ENCODE measurements at regions of chr4 and their contacts with region 1.

Region 1: GRCh38 chr4:163554870-163555465 is 60.5 kb downstream of the TMA16 start:
- DNase-seq: no peak
- H3K4me3 Mint-ChIP-seq: no peak overlapping the region
- H3K27ac Mint-ChIP-seq: no peak overlapping the region
- H3K4me1 Mint-ChIP-seq: peaks cover 28% of the 10 kb centered on the region
- H3K27me3 Mint-ChIP-seq: no peaks in the 10 kb centered on the region

Region 2: DNA sequence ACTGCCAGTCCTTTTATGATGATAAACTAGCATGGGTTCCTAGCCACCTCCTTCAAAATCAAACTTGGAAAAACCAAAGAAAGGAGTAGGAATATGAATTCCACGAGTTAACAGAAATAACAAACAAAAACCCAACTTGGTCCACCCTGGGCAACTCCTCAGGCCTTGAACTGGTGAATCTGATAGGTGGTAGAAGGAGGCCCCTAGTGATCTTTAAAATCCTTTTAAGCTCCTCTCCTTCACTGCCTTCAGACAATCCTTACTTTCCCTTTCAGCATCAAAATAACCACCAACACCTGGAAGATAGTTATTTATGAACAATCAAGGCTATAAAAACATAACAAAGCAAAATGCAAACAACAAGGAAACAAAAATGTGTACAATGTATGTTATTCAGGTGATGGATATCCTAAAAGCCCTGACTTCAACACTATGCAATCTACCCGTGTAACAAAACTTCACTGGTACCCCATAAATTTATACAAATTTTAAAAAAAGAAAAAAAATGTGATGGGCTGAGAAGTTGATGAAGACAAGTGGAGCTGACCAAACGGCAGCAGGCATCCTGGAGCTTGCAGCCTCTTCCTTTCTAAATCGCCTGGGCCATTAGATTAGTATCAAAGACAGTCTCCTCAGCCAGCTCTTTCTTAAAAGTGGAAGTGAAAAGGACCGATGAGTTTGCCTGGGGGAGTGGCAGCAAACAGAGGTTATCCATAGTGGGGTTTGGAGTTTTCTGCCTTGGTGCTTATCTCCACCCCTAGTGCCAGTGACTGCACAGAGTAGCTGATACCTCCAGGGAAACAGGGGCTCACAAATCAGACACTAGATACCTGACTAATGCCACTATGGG is 119.1 kb after region 1 on chr4:
- CTCF ChIA-PET with region 1: interaction called, 30 read pairs
- POLR2A ChIA-PET with region 1: no interaction called
- intact Hi-C with region 1: no loop called
- DNase-seq: no peak
- H3K4me3 Mint-ChIP-seq: no peak overlapping the region
- H3K27ac Mint-ChIP-seq: no peak overlapping the region
- H3K4me1 Mint-ChIP-seq: peaks cover 11% of the 10 kb centered on the region
- H3K27me3 Mint-ChIP-seq: no peaks in the 10 kb centered on the region

Region 3: DNA sequence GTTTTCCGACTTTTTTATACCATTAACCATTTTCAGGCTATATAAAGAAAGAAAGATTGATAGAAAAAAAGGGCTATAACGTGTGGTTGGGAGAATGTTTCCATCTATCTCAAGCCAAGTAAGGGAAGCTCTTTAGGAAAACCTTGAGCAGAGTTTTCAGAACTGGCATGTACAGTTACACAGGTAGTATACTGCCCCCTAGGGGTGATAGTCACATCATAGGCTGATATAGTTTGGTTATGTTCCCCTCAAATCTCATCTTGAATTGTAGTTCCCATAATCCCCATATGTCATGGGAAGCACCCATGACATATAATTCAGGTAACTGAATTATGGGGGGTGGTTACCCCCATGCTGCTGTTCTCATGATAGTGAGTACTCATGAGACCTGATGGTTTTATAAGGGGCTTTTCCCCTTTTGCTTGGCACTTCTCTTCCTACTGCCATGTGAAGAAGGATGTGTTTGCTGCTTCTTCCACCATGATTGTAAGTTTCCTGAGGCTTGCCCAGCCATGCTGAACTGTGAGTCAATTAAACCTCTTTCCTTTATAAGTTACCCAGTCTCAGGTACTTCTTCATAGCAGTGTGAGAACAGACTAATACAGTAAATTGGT is 126.3 kb after region 1 on chr4:
- CTCF ChIA-PET with region 1: interaction called, 133 read pairs
- POLR2A ChIA-PET with region 1: no interaction called
- intact Hi-C with region 1: loop called (anchors 1 kb)
- DNase-seq: no peak
- H3K4me3 Mint-ChIP-seq: no peak overlapping the region
- H3K27ac Mint-ChIP-seq: no peak overlapping the region
- H3K4me1 Mint-ChIP-seq: no peaks in the 10 kb centered on the region
- H3K27me3 Mint-ChIP-seq: no peaks in the 10 kb centered on the region

Region 4: DNA sequence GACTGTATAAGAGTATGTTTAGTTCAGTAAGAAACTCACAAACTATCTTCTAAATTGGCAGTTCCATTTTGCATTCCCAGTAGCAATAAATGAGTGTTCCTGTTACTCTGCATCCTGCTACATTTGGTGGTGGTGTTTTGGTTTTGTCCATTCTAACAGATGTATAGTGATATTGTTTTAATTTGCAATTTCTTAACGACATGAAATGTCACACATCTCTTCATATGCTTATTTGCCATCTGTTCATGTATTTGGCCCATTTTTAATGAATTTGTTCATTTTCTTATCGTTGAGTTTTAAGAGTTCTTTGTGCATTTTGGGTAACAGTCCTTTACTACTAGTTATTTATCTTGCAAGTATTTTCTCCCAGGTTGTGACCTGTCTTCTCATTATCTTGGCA is 171.7 kb after region 1 on chr4:
- CTCF ChIA-PET with region 1: no interaction called
- POLR2A ChIA-PET with region 1: no interaction called
- intact Hi-C with region 1: no loop called
- DNase-seq: no peak
- H3K4me3 Mint-ChIP-seq: no peak overlapping the region
- H3K27ac Mint-ChIP-seq: no peak overlapping the region
- H3K4me1 Mint-ChIP-seq: no peaks in the 10 kb centered on the region
- H3K27me3 Mint-ChIP-seq: peaks cover 10% of the 10 kb centered on the region

Region 5: DNA sequence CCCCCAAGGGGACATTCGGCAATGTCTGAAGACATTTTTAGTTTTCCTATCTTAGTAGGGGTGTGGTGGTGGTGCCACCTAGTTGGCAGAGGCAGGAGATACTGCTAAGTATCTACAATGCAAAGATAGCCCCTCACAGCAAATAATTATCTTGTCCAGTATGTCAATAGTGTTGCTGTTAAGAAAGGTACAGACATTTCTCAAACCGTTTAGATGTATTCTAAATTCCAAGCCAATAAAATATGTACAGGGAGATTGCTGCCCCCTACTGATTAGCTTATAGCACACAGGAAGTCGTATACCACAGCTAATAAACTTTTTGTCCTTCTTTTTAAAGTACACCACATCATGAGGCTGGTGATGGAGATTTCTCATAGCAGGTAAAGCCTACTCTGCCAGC is 200.0 kb after region 1 on chr4:
- CTCF ChIA-PET with region 1: interaction called, 18 read pairs
- POLR2A ChIA-PET with region 1: no interaction called
- intact Hi-C with region 1: loop called (anchors 1 kb)
- DNase-seq: no peak
- H3K4me3 Mint-ChIP-seq: no peak overlapping the region
- H3K27ac Mint-ChIP-seq: no peak overlapping the region
- H3K4me1 Mint-ChIP-seq: no peaks in the 10 kb centered on the region
- H3K27me3 Mint-ChIP-seq: peaks cover 2% of the 10 kb centered on the region

Region 6: DNA sequence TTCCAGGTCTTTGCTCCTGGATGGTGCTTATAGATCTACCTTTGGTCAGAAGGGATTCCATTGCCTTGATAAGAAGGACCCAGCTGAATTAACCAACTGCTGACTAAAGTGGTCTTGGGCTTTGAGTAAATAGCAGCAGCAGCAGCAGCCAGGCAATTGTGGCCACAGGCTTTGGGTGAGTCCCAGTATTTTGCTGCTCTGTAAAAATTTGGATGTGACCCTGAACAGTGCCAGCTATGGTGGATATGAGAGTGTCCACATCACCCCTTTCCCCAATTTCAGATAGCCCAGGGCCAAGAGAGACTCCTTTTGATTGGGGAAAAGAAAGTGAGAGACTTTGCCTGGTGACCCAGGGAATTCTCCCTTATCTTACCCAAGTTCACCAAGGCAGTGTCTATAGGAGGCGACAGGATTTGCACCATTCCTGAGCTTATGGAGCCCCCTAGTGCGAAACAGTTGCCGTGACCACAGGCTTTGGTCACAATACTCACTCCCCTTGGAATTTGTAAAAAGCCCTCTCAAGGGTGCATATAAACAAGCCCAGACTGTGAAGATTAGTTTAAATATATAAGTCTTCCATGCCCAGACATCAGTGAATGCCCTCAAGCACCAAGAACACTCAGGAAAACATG is 457.5 kb after region 1 on chr4:
- CTCF ChIA-PET with region 1: interaction called, 5 read pairs
- POLR2A ChIA-PET with region 1: no interaction called
- intact Hi-C with region 1: loop called (anchors 1 kb)
- DNase-seq: peak; percentile 29
- H3K4me3 Mint-ChIP-seq: no peak overlapping the region
- H3K27ac Mint-ChIP-seq: no peak overlapping the region
- H3K4me1 Mint-ChIP-seq: peaks cover 7% of the 10 kb centered on the region
- H3K27me3 Mint-ChIP-seq: no peaks in the 10 kb centered on the region

Region 7: DNA sequence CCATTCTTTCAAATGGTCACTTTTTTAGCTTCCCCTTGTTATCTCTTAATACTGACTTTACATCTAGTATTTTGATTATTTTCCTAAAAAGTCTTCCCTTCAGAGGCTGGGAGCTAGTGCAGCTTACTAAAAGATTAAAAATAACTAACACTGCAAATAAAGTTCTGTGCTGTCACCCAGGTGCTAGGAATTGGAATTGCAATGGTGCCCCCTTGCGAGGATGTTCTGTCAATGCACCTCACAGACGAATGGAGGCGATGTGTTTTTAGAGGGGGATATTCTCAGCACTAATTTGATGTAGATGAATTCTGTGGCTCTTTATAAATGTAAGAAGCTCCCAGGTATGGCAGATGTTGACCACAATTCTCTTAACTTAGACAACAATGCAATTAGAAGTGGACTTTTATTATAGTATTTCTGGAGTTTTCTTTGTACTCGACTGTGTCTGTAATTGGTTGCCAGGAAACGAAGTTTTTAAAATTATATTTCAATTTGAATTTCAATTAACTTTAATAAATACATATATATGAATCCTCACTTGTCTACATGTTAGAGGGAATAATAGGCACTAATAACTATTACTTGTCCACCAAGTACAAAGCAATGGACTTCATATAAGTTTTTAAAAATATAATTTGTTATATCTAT is 1177.0 kb after region 1 on chr4:
- CTCF ChIA-PET with region 1: interaction called, 105 read pairs
- POLR2A ChIA-PET with region 1: no interaction called
- intact Hi-C with region 1: loop called (anchors 1 kb)
- DNase-seq: peak; percentile 63
- H3K4me3 Mint-ChIP-seq: no peak overlapping the region
- H3K27ac Mint-ChIP-seq: no peak overlapping the region
- H3K4me1 Mint-ChIP-seq: no peaks in the 10 kb centered on the region
- H3K27me3 Mint-ChIP-seq: peaks cover 6% of the 10 kb centered on the region

Region 8: GRCh38 chr4:164748375-164748774 is 1193.4 kb after region 1 on chr4:
- CTCF ChIA-PET with region 1: interaction called, 4 read pairs
- POLR2A ChIA-PET with region 1: no interaction called
- intact Hi-C with region 1: loop called (anchors 1 kb)
- DNase-seq: no peak
- H3K4me3 Mint-ChIP-seq: no peak overlapping the region
- H3K27ac Mint-ChIP-seq: no peak overlapping the region
- H3K4me1 Mint-ChIP-seq: no peaks in the 10 kb centered on the region
- H3K27me3 Mint-ChIP-seq: peaks cover 5% of the 10 kb centered on the region